ENCODE measurements at regions of chr6 and their contacts with region 1.

Region 1: DNA sequence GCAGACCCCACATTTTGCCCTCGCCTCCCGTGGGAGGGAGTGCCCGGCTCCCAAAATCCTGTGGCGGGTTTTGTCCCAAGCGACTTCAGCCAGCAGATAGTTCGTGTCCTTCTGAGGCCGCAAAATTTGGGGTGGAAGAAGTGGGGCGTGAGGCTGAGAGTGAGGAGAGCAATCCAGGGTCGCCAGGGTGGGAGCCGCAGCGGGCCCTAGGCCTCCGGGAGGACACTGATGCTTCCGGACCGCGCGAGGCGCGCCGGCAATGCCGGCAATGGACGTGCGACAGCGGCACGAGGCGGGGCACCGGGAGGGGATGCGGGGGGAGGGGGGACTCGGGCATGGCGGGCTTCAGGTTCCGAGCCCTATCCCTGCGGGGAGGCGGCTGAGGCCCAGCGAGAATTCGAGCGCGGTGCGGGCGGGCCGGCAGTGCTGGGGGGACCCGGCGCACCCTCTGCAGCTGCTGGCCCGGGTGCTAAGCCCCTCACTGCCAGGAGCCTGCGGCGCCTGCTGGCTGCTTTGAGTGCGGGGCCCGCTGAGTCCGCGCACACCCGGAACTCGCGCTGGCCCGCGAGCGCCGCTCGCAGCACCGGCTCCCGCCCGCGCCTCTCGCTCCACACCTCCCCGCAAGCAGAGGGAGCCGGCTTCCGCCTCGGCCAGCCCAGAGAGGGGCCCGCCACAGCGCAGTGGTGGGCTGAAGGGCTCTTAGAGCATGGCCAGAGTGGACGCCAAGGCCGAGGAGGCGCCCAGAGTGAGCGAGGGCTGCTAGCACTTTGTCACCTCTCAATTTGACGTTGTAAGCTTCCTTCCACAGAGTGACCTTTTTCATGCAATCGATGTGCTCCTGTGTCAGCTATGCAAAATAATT is 143.8 kb downstream of the LPA start:
- DNase-seq: peak; percentile 75
- H3K4me3 Mint-ChIP-seq: peak overlapping the region; percentile 93
- H3K27ac Mint-ChIP-seq: peak overlapping the region; percentile 67
- H3K4me1 Mint-ChIP-seq: peaks cover 10% of the 10 kb centered on the region
- H3K27me3 Mint-ChIP-seq: no peaks in the 10 kb centered on the region
- CTCF ChIP-seq: no peak

Region 2: DNA sequence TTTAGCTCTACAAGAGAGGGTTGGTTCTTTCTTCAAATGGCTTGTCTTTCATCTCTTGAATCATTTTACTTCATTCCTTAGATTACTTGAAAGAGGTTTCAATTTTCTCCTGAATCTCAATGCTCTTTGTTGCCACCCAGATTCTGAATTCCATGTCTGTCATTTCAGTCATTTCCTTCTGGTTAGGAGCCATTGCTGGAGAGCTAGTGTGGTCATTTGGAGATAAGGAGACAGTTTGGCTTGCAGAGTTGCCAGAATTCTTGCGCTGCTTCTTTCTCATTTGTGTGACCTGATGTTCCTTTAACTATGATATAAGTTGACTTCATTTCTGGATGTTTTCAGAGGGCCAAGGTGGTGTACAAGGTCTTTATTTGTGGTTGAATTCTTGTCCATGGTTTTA is 14.3 kb before region 1 on chr6:
- CTCF ChIA-PET with region 1: interaction called, 15 read pairs
- POLR2A ChIA-PET with region 1: no interaction called
- intact Hi-C with region 1: no loop called
- DNase-seq: no peak
- H3K4me3 Mint-ChIP-seq: no peak overlapping the region
- H3K27ac Mint-ChIP-seq: no peak overlapping the region
- H3K4me1 Mint-ChIP-seq: no peaks in the 10 kb centered on the region
- H3K27me3 Mint-ChIP-seq: no peaks in the 10 kb centered on the region
- CTCF ChIP-seq: no peak

Region 3: GRCh38 chr6:160667639-160668481 is 147.6 kb after region 1 on chr6:
- CTCF ChIA-PET with region 1: interaction called, 36 read pairs
- POLR2A ChIA-PET with region 1: no interaction called
- intact Hi-C with region 1: loop called (anchors 1 kb)
- DNase-seq: peak; percentile 53
- H3K4me3 Mint-ChIP-seq: no peak overlapping the region
- H3K27ac Mint-ChIP-seq: no peak overlapping the region
- H3K4me1 Mint-ChIP-seq: no peaks in the 10 kb centered on the region
- H3K27me3 Mint-ChIP-seq: peaks cover 27% of the 10 kb centered on the region
- CTCF ChIP-seq: peak; percentile 74